Posterior cingulate gyrus (tissue), 11 donors: ENCODE measurements at regions of chr21 and their contacts with region 1.

Region 1: GRCh38 chr21:44510508-44511210 is 29.3 kb downstream of the KRTAP10-1 start:
- DNase-seq: peak in 8 of 10 donors; percentile 24 to 88 (median 34)

Region 2: DNA sequence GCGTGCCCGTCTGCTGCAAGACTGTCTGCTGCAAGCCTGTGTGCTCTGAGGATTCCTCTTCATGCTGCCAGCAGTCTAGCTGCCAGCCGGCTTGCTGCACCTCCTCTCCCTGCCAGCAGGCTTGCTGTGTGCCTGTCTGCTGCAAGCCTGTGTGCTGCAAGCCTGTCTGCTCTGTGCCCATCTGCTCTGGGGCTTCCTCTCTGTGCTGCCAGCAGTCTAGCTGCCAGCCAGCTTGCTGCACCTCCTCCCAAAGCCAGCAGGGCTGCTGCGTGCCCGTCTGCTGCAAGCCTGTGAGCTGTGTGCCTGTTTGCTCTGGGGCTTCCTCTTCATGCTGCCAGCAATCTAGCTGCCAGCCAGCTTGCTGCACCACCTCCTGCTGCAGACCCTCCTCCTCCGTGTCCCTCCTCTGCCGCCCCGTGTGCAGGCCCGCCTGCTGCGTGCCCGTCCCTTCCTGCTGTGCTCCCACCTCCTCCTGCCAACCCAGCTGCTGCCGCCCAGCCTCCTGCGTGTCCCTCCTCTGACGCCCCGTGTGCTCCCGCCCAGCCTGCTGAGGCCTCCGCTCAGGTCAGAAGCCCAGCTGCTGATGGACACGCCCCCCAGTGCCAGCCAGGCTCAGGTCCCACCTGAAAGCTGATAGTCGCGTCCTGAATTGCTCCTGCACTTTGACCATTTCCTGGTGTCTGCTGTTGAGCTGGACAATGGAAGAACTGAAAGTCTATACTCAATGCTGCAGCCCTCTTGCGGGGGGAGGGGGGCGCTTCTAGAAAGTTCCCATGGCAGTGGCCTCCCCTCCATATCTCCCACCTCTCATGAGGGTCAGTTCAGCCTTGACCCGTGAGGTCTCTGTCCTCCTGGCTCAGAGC is 64.0 kb after region 1 on chr21:
- intact Hi-C with region 1: no loop called
- DNase-seq: peak in 2 of 10 donors; percentile 57 to 74

Region 3: GRCh38 chr21:44585892-44586291 is 75.2 kb after region 1 on chr21:
- intact Hi-C with region 1: no loop called
- DNase-seq: peak in 1 of 10 donors; percentile 58

Region 4: DNA sequence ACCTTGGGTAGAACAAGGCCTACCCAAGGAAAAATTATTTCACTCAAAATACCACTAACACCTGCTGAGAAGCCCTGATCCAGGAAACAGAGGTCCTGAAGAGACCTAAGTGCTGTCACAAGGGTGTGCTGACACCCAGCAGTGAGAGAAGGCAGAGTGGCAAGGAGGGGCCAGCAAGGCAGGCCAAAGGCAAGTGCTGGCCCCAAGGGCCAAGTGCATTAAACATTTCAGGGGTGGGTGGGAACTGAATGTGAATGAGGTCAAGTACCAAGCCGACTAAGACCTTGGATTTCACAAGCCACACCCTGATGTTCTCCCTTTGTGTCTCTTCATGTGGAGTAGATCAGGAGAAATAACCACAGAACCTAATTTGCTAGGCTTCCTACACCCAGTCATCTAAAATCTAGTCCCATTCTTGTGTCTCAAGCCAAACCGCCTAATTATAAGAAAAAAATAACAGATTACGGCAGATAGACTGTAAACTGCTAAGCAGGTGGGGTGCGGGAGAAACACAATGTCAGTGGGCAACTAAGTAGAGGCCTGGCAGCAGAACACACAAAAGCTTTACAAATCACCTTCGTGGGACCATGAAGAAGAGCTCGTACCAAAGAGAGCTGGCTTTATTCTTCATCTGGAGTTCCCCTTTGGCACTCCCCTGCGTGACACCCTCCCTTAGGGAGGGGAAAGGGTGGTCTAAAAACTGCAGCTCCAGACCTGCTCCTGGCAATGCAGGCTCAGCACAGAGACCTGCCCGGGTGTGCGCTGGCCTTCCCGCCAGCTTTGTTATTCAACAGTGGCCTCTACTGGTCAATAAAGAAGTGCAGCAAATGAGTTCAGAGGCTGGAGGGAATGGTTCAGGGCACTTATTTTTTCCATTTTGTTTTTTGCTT is 282.3 kb after region 1 on chr21:
- intact Hi-C with region 1: loop called (anchors 1 kb)
- DNase-seq: peak in 6 of 10 donors; percentile 41 to 94 (median 48)